Left lung (tissue), 14 donors: ENCODE measurements at regions of chr2 and their contacts with region 1.

Region 1: GRCh38 chr2:158903711-158904443 is 64.6 kb upstream of the TANC1 start:
- DNase-seq: no peak
- ATAC-seq: no peak
- H3K4me3 ChIP-seq: no peak overlapping the region
- H3K27ac ChIP-seq: no peak overlapping the region
- H3K4me1 ChIP-seq: peaks cover 0 to 5% of the 10 kb centered on the region in 2 donors
- H3K27me3 ChIP-seq: no peaks in the 10 kb centered on the region
- CTCF ChIP-seq: no peak

Region 2: DNA sequence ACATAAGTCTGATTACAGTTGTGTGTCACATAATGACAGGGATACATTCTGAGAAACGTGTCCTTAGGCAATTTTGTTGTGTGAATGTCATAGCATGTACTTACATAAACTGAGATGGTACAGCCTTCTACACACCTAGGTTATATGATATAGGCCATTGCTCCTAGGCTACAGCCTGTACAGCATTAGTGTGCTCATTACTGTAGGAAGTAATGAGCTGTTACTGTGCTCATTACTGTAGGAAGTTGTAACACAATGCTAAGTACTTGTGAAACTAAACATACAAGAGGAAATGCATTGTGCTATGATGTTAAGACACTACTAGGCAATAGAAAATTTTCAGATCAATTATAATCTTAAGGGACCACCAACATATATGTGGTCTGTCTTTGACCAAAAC is 729.4 kb before region 1 on chr2:
- intact Hi-C with region 1: no loop called
- DNase-seq: no peak
- ATAC-seq: no peak
- H3K4me3 ChIP-seq: no peak overlapping the region
- H3K27ac ChIP-seq: peak overlapping the region in 1 of 2 donors; percentile 48
- H3K4me1 ChIP-seq: peaks cover 0 to 5% of the 10 kb centered on the region in 2 donors
- H3K27me3 ChIP-seq: no peaks in the 10 kb centered on the region
- CTCF ChIP-seq: no peak

Region 3: DNA sequence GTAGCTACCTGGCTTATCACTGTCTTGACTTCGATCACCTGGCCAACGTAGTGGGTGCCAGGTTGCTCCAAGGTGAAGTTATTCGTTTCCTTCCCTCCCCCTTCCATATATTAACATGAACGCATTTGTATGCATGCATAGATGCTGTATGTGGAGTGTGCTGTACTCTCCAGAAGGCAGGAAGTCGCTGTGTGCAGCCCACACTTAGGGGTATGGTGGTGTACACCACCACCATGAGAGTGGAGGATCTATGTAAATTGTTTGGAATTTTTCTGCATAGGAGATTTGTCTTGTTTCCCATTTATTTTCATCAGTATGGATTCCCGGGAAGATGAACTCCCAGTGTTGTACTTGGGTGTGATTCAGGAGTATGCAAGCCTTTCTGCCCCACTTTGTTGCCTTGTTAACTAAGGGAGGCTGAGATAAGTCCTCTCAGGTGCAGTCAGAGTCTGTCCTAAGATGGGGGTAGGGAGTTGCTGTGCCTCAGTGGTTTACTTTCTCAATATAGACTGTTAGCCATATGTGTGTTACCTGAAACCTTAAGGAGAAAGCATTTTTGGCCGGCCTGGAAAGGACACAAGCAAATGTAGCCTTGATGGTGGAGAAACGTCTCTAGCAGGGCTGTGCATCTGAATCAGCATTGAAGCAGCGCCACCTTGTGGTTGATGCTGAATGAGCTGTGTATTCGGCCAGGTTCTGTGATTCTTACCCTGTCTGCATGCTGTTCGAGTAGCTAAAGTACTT is 214.4 kb after region 1 on chr2:
- intact Hi-C with region 1: loop called (anchors 5 to 10 kb)
- DNase-seq: peak; percentile 78 to 91 (median 85)
- ATAC-seq: peak; percentile 89
- H3K4me3 ChIP-seq: no peak overlapping the region
- H3K27ac ChIP-seq: no peak overlapping the region
- H3K4me1 ChIP-seq: peaks cover 4 to 16% of the 10 kb centered on the region in 2 donors
- H3K27me3 ChIP-seq: no peaks in the 10 kb centered on the region
- CTCF ChIP-seq: peak; percentile 85 to 87